Right lobe of liver (tissue), 6 donors: ENCODE measurements at regions of chr16 and their contacts with region 1.

Region 1: GRCh38 chr16:68328151-68328859 is 17.5 kb downstream of the PRMT7 start:
- DNase-seq: peak; percentile 76 to 81 (median 79)
- ATAC-seq: peak; percentile 89 to 96 (median 96)
- H3K4me3 ChIP-seq: no peak overlapping the region
- H3K27ac ChIP-seq: no peak overlapping the region
- H3K4me1 ChIP-seq: peaks cover 0 to 21% (median 10%) of the 10 kb centered on the region in 4 donors
- H3K27me3 ChIP-seq: no peaks in the 10 kb centered on the region
- CTCF ChIP-seq: peak; percentile 90 to 95 (median 92)
- POLR2A ChIP-seq: no peak

Region 2: GRCh38 chr16:68244903-68245853 is 83.1 kb before region 1 on chr16 and contains the start of gene PLA2G15:
- intact Hi-C with region 1: loop called in 1 of 2 experiments (anchors 5 kb)
- DNase-seq: peak; percentile 97 to 99 (median 98)
- ATAC-seq: peak; percentile 92 to 95 (median 94)
- H3K4me3 ChIP-seq: peak within 1 kb of the TSS; percentile 82 to 94 (median 86)
- H3K27ac ChIP-seq: peak within 1 kb of the TSS in 2 of 3 donors; percentile 36 to 48
- H3K4me1 ChIP-seq: peaks cover 0 to 41% (median 6%) of the 10 kb centered on the region in 4 donors
- H3K27me3 ChIP-seq: no peaks in the 10 kb centered on the region
- CTCF ChIP-seq: no peak
- POLR2A ChIP-seq: peak; percentile 73
- total RNA-seq, gene PLA2G15: 9.7 to 21.2 (median 13.7) TPM

Region 3: DNA sequence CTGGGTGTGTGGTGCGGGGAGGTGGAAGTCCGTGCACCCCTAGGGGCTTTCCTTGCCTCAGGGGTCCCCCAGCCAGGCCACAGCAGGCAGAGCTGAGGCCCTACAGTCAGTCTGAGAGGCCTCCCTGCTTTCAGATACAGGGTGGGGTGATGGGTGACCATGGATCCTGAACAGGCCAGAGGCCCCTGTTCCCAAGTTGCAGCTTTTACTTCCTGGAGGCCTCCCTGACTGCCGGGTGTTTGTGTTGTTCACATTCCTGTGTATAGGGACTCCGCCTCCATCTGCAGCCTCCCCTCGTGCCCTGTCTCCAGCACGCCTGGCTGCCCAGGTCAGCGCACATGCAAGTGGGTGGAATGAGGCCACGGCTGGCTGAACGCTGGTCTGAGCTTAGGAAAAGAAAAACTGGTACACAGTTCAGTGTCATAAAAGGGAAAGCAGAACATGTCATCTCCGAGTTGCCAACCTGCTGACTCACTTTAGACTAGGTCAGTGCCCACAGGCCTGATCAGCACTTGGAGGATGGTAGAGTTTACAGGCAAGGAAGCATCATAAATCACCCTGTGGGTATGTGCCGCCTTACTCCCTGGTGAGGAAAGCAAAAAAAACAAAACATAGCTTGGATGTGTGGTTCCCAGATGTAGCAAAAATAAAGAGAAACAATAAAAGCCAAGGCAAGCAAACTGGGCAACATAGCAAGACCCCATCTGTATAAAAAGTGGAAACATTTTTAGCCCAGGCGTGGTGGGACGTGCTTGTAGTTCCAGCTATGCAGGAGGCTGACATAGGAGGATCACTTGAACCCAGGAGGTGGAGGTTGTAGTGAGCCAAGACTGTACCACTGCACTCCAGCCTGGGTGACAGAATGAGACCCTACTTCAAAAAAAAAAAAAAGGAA is 70.2 kb before region 1 on chr16:
- intact Hi-C with region 1: loop called in 1 of 2 experiments (anchors 5 kb)
- DNase-seq: no peak
- ATAC-seq: peak in 1 of 4 donors; percentile 17
- H3K4me3 ChIP-seq: no peak overlapping the region
- H3K27ac ChIP-seq: no peak overlapping the region
- H3K4me1 ChIP-seq: no peaks in the 10 kb centered on the region
- H3K27me3 ChIP-seq: no peaks in the 10 kb centered on the region
- CTCF ChIP-seq: no peak
- POLR2A ChIP-seq: no peak